Activated CD4-positive, alpha-beta T cell treated with anti-CD3 and anti-CD28 coated beads for 36 hours (primary cell): ENCODE measurements at regions of chr19 and their contacts with region 1.

Region 1: DNA sequence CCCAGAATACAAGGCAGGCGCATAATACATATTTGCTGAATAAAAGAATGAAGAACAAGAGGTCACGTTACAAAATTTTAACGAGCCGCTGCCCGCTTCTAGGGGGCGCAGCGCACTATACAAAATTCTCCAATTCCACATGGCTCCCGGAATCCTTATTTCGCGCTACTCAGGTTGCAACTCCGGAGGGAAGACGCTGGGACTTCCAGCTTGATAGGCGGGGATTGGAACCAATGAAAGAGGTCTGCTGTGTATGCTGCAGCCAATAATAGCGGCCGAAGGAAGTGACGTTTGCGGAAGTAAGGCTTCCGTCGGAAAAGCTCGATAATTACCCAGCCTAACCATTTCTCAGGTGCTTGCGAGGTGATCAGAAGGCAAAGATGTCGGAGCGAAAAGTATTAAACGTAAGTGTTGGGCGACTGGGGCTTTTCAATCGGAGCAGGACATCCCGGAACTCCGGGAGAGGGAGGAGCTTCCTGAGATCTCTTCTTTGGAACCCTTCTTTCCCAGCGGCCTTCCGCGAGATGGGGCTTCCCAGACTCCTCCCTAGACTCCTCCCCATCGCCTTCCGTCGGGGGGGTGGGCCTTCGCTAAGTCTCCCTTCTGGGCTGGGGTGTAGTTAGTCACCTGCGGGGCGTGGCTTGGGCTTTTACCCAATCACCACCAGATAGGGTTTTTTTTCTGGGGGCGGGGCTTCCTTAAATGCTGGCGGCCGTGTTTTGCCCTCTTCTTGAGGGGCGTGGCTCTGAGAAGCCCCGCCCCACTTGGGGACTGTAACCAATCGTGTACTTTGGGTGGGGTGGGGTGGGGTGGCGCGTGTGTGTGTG is at the start of gene YJU2:
- DNase-seq: peak; percentile 100
- ATAC-seq: peak; percentile 97
- H3K4me3 Mint-ChIP-seq: peak within 1 kb of the TSS; percentile 84
- H3K27ac Mint-ChIP-seq: peak within 1 kb of the TSS; percentile 100
- H3K4me1 Mint-ChIP-seq: peaks cover 9% of the 10 kb centered on the region
- H3K27me3 Mint-ChIP-seq: no peaks in the 10 kb centered on the region
- total RNA-seq, gene YJU2: 29.8 to 34.8 TPM

Region 2: DNA sequence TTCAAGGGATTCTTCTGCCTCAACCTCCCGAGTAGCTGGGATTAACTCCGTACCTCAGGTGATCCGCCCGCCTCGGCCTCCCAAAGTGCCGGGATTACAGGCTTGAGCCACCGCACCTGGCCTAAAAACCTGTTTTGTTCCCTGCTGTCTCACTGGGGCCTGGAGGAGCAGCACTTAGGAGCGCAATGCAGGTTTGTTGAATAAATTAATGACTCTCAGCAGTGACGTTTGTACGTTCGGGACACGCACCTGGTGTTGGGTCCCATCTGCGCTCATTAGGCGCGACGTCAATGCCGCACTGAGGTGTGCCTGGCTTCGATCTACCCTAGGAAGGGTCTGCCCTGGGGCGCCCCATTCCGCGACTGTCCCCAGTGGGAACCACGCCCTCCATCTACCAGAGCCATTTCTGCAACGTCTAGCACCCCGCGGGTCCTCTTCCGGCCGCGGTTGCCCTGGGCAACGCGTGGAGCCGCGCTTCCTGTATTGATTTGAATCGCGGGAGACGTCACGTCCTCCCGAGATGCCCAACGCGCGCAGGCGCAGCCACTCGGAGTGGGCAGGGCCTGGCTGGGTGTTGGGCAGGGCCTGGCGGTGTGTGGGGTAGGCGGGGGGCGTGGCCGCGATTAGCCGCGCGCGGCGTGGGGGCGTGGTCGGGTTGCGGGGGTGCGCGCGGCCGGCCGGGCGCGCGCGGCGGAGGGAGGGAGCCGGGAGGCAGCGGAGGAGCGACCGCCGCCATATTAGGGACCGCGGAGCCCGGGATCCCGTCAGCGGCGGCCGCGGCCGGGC is 741.2 kb before region 1 on chr19 and contains the start of gene FZR1:
- CTCF ChIA-PET with region 1: no interaction called
- POLR2A ChIA-PET with region 1: interaction called, 7 read pairs
- intact Hi-C with region 1: loop called in 1 of 2 experiments (anchors 2 kb)
- DNase-seq: peak; percentile 100
- ATAC-seq: peak; percentile 92
- H3K4me3 Mint-ChIP-seq: peak within 1 kb of the TSS; percentile 84
- H3K27ac Mint-ChIP-seq: peak within 1 kb of the TSS; percentile 86
- H3K4me1 Mint-ChIP-seq: peaks cover 45% of the 10 kb centered on the region
- H3K27me3 Mint-ChIP-seq: no peaks in the 10 kb centered on the region
- total RNA-seq, gene FZR1: 40.8 to 50.7 TPM

Region 3: GRCh38 chr19:3984908-3985642 is 261.9 kb before region 1 on chr19 and contains the start of gene EEF2:
- CTCF ChIA-PET with region 1: no interaction called
- POLR2A ChIA-PET with region 1: no interaction called
- intact Hi-C with region 1: loop called in 1 of 2 experiments (anchors 1 kb)
- DNase-seq: peak; percentile 94
- ATAC-seq: peak; percentile 45
- H3K4me3 Mint-ChIP-seq: peak within 1 kb of the TSS; percentile 87
- H3K27ac Mint-ChIP-seq: peak within 1 kb of the TSS; percentile 94
- H3K4me1 Mint-ChIP-seq: peaks cover 52% of the 10 kb centered on the region
- H3K27me3 Mint-ChIP-seq: no peaks in the 10 kb centered on the region
- total RNA-seq, gene EEF2: 3,116 to 3,255 TPM

Region 4: GRCh38 chr19:4182084-4182810 is 64.7 kb before region 1 on chr19 and contains the starts of genes ANKRD24 and SIRT6:
- CTCF ChIA-PET with region 1: no interaction called
- POLR2A ChIA-PET with region 1: no interaction called
- intact Hi-C with region 1: loop called in 1 of 2 experiments (anchors 1 kb)
- DNase-seq: peak; percentile 98
- ATAC-seq: peak; percentile 84
- H3K4me3 Mint-ChIP-seq: peak within 1 kb of the TSS; percentile 92
- H3K27ac Mint-ChIP-seq: peak within 1 kb of the TSS; percentile 93
- H3K4me1 Mint-ChIP-seq: peaks cover 30% of the 10 kb centered on the region
- H3K27me3 Mint-ChIP-seq: no peaks in the 10 kb centered on the region
- total RNA-seq, gene ANKRD24: 1.1 to 1.3 TPM
- total RNA-seq, gene SIRT6: 26.2 to 29.4 TPM

Region 5: DNA sequence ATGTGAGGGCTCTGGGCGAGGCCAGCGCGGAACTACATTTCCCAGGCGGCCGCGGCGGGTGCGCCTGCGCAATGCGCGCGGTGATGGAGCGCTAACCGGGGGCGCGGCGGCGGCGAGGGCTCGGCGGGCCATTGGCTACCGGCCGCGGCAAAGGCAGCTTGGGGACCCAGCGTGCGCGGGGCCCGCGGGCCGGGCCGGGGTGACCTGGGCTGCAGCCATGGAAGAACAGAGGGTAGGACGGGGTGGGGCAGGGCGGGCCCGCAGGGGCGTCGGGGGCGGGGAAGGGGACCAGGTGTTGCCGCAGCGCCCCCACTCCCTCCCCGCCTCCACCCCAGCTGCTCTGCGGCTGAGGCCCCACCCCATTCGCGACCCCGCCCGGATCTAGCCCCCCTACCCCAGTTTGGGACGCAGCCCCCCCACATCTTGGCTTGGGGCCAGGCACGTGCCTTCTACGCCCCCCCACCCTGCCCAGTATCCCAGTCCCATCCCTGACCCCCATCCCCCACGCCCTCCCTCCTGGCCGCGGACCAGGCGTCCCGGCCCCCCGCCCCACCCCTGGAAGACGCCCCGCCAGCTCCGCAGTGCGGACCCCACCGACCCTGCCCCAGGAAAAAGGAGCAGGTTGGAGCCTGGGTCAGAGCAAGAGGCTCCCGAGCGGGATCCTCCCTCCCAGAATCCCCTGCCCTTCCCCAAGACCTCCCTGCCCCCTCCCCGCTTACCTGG is 57.7 kb after region 1 on chr19 and contains the start of gene FSD1:
- CTCF ChIA-PET with region 1: no interaction called
- POLR2A ChIA-PET with region 1: no interaction called
- intact Hi-C with region 1: loop called in 1 of 2 experiments (anchors 1 kb)
- DNase-seq: peak; percentile 90
- ATAC-seq: peak; percentile 82
- H3K4me3 Mint-ChIP-seq: peak within 1 kb of the TSS; percentile 66
- H3K27ac Mint-ChIP-seq: peak within 1 kb of the TSS; percentile 72
- H3K4me1 Mint-ChIP-seq: peaks cover 34% of the 10 kb centered on the region
- H3K27me3 Mint-ChIP-seq: no peaks in the 10 kb centered on the region
- total RNA-seq, gene FSD1: 23.1 to 25.3 TPM

Region 6: GRCh38 chr19:4723367-4724187 is 476.6 kb after region 1 on chr19 and contains the start of gene DPP9:
- CTCF ChIA-PET with region 1: no interaction called
- POLR2A ChIA-PET with region 1: no interaction called
- intact Hi-C with region 1: loop called in 1 of 2 experiments (anchors 1 kb)
- DNase-seq: peak; percentile 98
- ATAC-seq: peak; percentile 95
- H3K4me3 Mint-ChIP-seq: peak within 1 kb of the TSS; percentile 92
- H3K27ac Mint-ChIP-seq: peak within 1 kb of the TSS; percentile 93
- H3K4me1 Mint-ChIP-seq: peaks cover 26% of the 10 kb centered on the region
- H3K27me3 Mint-ChIP-seq: no peaks in the 10 kb centered on the region
- total RNA-seq, gene DPP9: 49.2 to 51.3 TPM